ENCODE measurements at regions of chr7 and their contacts with region 1.

Region 1: GRCh38 chr7:90211391-90212148 is at the start of gene STEAP2:
- DNase-seq: peak; percentile 88
- H3K4me3 ChIP-seq: peak within 1 kb of the TSS; percentile 55 to 77 (median 75)
- H3K27ac ChIP-seq: peak within 1 kb of the TSS; percentile 51
- H3K4me1 ChIP-seq: peaks cover 13% of the 10 kb centered on the region
- H3K27me3 ChIP-seq: no peaks in the 10 kb centered on the region
- CTCF ChIP-seq: peak; percentile 26 to 74
- total RNA-seq, gene STEAP2: 9.2 to 10.9 TPM

Region 2: DNA sequence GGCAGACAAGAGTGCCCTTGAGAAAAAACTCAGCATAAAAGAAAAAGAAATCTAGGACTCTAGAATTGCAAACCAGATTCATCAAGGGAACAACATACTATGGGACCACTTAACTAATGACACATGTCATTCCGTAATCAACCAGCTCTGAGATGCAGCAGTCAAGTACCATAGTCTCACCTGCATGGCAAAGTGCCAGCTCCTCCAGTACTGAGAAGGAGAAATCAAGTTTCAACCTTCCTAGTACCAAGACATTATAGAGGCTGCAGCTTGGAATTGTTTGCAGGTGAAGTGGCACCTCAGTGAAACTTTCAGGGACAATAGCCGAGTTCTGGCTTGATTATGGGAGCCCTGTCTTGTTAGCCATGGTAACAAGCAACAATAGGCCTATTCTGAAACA is 45.8 kb before region 1 on chr7:
- CTCF ChIA-PET with region 1: no interaction called
- dilution Hi-C with region 1: no loop called
- in situ Hi-C with region 1: no loop called
- intact Hi-C with region 1: no loop called
- DNase-seq: no peak
- H3K4me3 ChIP-seq: no peak overlapping the region
- H3K27ac ChIP-seq: no peak overlapping the region
- H3K4me1 ChIP-seq: no peaks in the 10 kb centered on the region
- H3K27me3 ChIP-seq: no peaks in the 10 kb centered on the region
- CTCF ChIP-seq: no peak

Region 3: DNA sequence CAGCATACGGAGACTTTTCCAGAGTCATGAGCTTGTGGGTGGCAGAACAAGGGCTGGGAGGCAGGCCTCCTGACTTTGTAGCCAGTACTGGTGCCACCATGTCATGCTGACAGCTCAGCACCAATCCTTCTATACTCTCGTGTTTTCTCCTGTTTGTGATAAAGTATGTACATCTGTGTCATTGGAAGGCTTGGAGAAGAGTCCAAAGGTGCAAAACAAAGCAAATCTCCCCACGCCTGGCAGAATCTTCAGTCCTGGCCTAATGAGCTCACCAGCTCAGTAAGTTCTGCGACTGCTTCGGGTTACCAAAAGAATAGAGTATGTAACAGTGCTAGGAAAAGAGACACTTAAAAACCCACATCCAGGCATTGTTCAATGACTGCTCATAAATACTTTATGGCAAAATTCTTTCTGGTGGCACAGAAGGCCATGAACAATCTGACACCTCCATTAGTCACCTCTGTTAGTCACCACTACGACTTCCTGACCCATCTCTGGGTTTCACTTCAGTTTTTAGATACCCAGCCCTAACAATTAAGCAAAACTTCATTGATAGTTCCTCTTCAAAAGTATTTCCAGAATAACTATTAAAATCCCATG is 32.8 kb before region 1 on chr7:
- CTCF ChIA-PET with region 1: interaction called, 4 read pairs
- dilution Hi-C with region 1: no loop called
- in situ Hi-C with region 1: no loop called
- intact Hi-C with region 1: loop called (anchors 2 kb)
- DNase-seq: peak; percentile 89
- H3K4me3 ChIP-seq: no peak overlapping the region
- H3K27ac ChIP-seq: peak overlapping the region; percentile 93
- H3K4me1 ChIP-seq: peaks cover 37% of the 10 kb centered on the region
- H3K27me3 ChIP-seq: no peaks in the 10 kb centered on the region
- CTCF ChIP-seq: no peak